CD8-positive, alpha-beta T cell (primary cell): ENCODE measurements at regions of chr3 and their contacts with region 1.

Region 1: GRCh38 chr3:50525987-50526386 is 22.6 kb upstream of the CACNA2D2 start:
- DNase-seq: peak in 6 of 9 experiments; percentile 14 to 54 (median 40)
- ATAC-seq: peak; percentile 66
- H3K4me3 ChIP-seq: no peak overlapping the region
- H3K4me3 Mint-ChIP-seq: no peak overlapping the region
- H3K27ac ChIP-seq: no peak overlapping the region
- H3K27ac Mint-ChIP-seq: no peak overlapping the region
- H3K4me1 ChIP-seq: no peaks in the 10 kb centered on the region
- H3K4me1 Mint-ChIP-seq: no peaks in the 10 kb centered on the region
- H3K27me3 ChIP-seq: no peaks in the 10 kb centered on the region
- H3K27me3 Mint-ChIP-seq: peaks cover 14% of the 10 kb centered on the region
- CTCF ChIP-seq: no peak

Region 2: DNA sequence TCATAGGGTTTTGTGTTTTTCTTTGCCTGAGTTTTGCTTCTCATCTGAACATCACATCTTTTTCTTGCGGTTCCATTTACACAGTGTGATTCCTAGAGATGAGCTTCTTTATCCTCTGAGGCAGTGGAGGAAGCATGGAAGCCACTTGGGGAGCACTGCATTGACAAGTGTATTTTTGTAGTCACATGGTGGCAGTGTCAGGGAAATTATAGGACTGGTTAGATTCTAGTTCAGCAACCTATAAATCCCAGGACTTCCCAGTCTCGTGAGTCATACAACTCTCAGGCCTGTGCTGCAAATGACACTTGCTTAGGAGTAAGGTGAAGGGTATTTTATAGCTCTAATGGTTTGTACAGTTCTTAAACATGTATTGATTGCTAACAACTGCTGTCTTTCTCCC is 527.7 kb before region 1 on chr3:
- CTCF ChIA-PET with region 1: no interaction called
- POLR2A ChIA-PET with region 1: no interaction called
- intact Hi-C with region 1: no loop called
- DNase-seq: no peak
- ATAC-seq: no peak
- H3K4me3 ChIP-seq: no peak overlapping the region
- H3K4me3 Mint-ChIP-seq: no peak overlapping the region
- H3K27ac ChIP-seq: no peak overlapping the region
- H3K27ac Mint-ChIP-seq: peak overlapping the region; percentile 52
- H3K4me1 ChIP-seq: no peaks in the 10 kb centered on the region
- H3K4me1 Mint-ChIP-seq: peaks cover 2% of the 10 kb centered on the region
- H3K27me3 ChIP-seq: no peaks in the 10 kb centered on the region
- H3K27me3 Mint-ChIP-seq: no peaks in the 10 kb centered on the region
- CTCF ChIP-seq: no peak

Region 3: GRCh38 chr3:50390508-50391224 is 135.3 kb before region 1 on chr3:
- CTCF ChIA-PET with region 1: no interaction called
- POLR2A ChIA-PET with region 1: no interaction called
- intact Hi-C with region 1: no loop called
- DNase-seq: no peak
- ATAC-seq: no peak
- H3K4me3 ChIP-seq: no peak overlapping the region
- H3K4me3 Mint-ChIP-seq: no peak overlapping the region
- H3K27ac ChIP-seq: no peak overlapping the region
- H3K27ac Mint-ChIP-seq: no peak overlapping the region
- H3K4me1 ChIP-seq: no peaks in the 10 kb centered on the region
- H3K4me1 Mint-ChIP-seq: no peaks in the 10 kb centered on the region
- H3K27me3 ChIP-seq: no peaks in the 10 kb centered on the region
- H3K27me3 Mint-ChIP-seq: no peaks in the 10 kb centered on the region
- CTCF ChIP-seq: no peak

Region 4: GRCh38 chr3:50480471-50480870 is 45.5 kb before region 1 on chr3:
- CTCF ChIA-PET with region 1: no interaction called
- POLR2A ChIA-PET with region 1: no interaction called
- intact Hi-C with region 1: no loop called
- DNase-seq: peak in 1 of 9 experiments; percentile 37
- ATAC-seq: no peak
- H3K4me3 ChIP-seq: no peak overlapping the region
- H3K4me3 Mint-ChIP-seq: no peak overlapping the region
- H3K27ac ChIP-seq: peak overlapping the region in 1 of 2 experiments; percentile 36
- H3K27ac Mint-ChIP-seq: no peak overlapping the region
- H3K4me1 ChIP-seq: peaks cover 28% of the 10 kb centered on the region
- H3K4me1 Mint-ChIP-seq: peaks cover 31% of the 10 kb centered on the region
- H3K27me3 ChIP-seq: no peaks in the 10 kb centered on the region
- H3K27me3 Mint-ChIP-seq: no peaks in the 10 kb centered on the region
- CTCF ChIP-seq: no peak

Region 5: GRCh38 chr3:50491023-50491422 is 35.0 kb before region 1 on chr3:
- CTCF ChIA-PET with region 1: no interaction called
- POLR2A ChIA-PET with region 1: no interaction called
- intact Hi-C with region 1: loop called in 1 of 2 experiments (anchors 5 kb)
- DNase-seq: no peak
- ATAC-seq: no peak
- H3K4me3 ChIP-seq: no peak overlapping the region
- H3K4me3 Mint-ChIP-seq: no peak overlapping the region
- H3K27ac ChIP-seq: no peak overlapping the region
- H3K27ac Mint-ChIP-seq: no peak overlapping the region
- H3K4me1 ChIP-seq: no peaks in the 10 kb centered on the region
- H3K4me1 Mint-ChIP-seq: peaks cover 12% of the 10 kb centered on the region
- H3K27me3 ChIP-seq: no peaks in the 10 kb centered on the region
- H3K27me3 Mint-ChIP-seq: no peaks in the 10 kb centered on the region
- CTCF ChIP-seq: no peak

Region 6: DNA sequence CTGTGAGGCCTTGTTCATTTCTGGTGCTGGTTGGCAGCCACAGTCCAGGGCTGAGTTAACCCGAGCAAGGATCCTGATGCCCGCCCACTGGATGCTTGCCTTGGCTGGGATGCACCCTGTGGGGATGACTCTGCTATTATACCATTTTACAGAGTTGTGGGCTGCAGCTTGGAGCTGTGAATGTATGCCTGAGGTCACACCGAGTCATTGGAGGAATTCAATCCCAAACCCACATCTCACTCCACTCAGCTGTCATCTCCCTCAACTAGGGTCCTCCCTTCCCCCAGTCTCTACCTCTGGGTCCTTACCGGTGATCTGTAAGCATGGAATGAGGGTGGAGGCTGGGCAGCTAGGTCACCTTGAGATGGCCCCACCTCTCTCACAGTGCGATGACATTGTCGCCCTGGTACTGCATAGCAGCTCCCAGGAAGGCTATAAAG is 113.1 kb after region 1 on chr3:
- CTCF ChIA-PET with region 1: no interaction called
- POLR2A ChIA-PET with region 1: no interaction called
- intact Hi-C with region 1: no loop called
- DNase-seq: no peak
- ATAC-seq: no peak
- H3K4me3 ChIP-seq: no peak overlapping the region
- H3K4me3 Mint-ChIP-seq: no peak overlapping the region
- H3K27ac ChIP-seq: no peak overlapping the region
- H3K27ac Mint-ChIP-seq: peak overlapping the region; percentile 45
- H3K4me1 ChIP-seq: peaks cover 22% of the 10 kb centered on the region
- H3K4me1 Mint-ChIP-seq: peaks cover 36% of the 10 kb centered on the region
- H3K27me3 ChIP-seq: no peaks in the 10 kb centered on the region
- H3K27me3 Mint-ChIP-seq: no peaks in the 10 kb centered on the region
- CTCF ChIP-seq: no peak